Activated T-helper 2 cell treated with anti-CD3 and anti-CD28 coated beads, Interferon-gamma antibody, Interleukin-2, Interleukin-4, amounts not matched to agents 10 μg/mL and 5 μg/mL and 100 μg/mL, durations not matched to agents 14 hours and 24 hours and 36 hours (primary cell): ENCODE measurements at regions of chr1 and their contacts with region 1.

Region 1: GRCh38 chr1:61851849-61852669 is 109.8 kb downstream of the PATJ start:
- DNase-seq: no peak
- H3K4me3 Mint-ChIP-seq: no peak overlapping the region
- H3K27ac Mint-ChIP-seq: no peak overlapping the region
- H3K4me1 Mint-ChIP-seq: no peaks in the 10 kb centered on the region
- H3K27me3 Mint-ChIP-seq: no peaks in the 10 kb centered on the region

Region 2: DNA sequence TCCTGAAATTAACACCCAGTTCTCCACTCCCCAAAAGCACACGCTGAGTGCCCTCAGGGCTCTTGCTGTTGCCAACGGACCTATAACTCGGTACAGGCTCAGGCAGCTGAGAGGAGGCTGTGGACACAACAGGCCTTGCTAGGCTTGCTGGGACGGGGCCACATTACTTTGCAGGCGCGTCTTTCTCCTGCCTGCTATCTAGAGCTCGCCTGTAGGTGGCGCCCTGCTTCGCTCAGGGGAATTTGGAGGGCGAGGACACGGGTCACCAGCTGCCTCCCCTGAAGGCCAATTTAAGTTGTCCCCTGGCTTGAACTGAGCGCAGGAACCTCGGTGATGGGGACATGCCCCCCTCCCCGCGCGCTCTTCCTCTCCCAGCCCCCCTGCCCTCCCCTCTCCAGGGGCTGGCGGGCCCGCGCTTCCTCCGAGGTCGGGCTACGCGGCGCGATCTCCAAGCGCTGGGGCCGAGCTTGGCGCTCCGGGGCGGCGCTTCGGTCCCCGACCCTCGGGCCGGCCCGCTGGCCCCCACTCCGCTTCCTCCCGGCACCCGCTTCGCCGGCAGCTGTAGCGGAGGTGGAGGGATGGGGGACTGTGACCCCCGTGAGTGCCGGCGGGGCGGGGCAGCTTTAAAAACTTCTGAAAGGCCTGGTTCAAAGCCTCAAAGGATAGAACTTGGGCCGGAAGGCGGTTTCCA is 802.1 kb before region 1 on chr1:
- intact Hi-C with region 1: loop called (anchors 10 kb)
- DNase-seq: peak; percentile 73
- H3K4me3 Mint-ChIP-seq: peak overlapping the region; percentile 42
- H3K27ac Mint-ChIP-seq: no peak overlapping the region
- H3K4me1 Mint-ChIP-seq: peaks cover 11% of the 10 kb centered on the region
- H3K27me3 Mint-ChIP-seq: peaks cover 56% of the 10 kb centered on the region

Region 3: DNA sequence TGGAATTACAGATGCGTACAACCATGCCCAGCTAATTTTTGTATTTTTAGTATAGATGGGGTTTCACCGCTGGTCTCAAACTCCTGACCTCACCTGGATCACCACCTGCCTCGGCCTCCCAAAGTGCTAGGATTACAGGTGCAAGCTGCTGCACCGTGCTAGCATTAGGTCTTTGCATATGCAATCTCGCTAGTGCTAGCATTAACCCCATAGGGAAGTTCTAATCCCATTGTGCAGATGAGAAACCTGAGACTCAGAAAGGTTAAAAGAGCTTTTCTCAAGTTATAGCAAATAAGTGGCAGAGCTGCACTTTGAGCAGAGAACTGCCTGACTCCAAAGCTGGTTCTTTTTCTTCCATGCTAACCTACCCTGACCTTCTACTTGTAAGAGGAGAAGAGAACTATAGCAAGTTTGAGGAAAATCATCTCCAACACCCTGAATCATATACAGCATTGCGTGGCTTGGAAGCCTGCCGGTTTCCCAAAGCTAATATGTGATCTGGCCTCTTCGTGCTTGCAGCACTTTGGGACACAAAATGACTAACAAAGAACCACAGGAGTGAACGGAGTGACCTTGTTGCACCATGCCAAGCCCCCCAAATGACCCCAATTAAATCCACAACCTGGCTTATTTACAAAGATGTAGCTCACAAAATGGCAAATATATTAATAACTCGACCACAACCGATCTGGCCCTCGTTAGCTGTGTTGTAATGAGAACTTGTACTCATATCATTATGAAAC is 312.2 kb before region 1 on chr1:
- intact Hi-C with region 1: loop called (anchors 5 kb)
- DNase-seq: no peak
- H3K4me3 Mint-ChIP-seq: no peak overlapping the region
- H3K27ac Mint-ChIP-seq: no peak overlapping the region
- H3K4me1 Mint-ChIP-seq: peaks cover 20% of the 10 kb centered on the region
- H3K27me3 Mint-ChIP-seq: peaks cover 15% of the 10 kb centered on the region

Region 4: GRCh38 chr1:61641578-61642336 is 210.3 kb before region 1 on chr1:
- intact Hi-C with region 1: loop called (anchors 10 kb)
- DNase-seq: peak; percentile 29
- H3K4me3 Mint-ChIP-seq: peak overlapping the region; percentile 63
- H3K27ac Mint-ChIP-seq: no peak overlapping the region
- H3K4me1 Mint-ChIP-seq: peaks cover 8% of the 10 kb centered on the region
- H3K27me3 Mint-ChIP-seq: peaks cover 1% of the 10 kb centered on the region